Sciatic nerve (tissue), 2 donors: ENCODE measurements at regions of chr4 and their contacts with region 1.

Region 1: GRCh38 chr4:87863486-87863885 is 30.7 kb downstream of the MEPE start:
- DNase-seq: no peak
- ATAC-seq: no peak

Region 2: GRCh38 chr4:87882321-87882720 is 18.8 kb after region 1 on chr4:
- intact Hi-C with region 1: no loop called
- DNase-seq: no peak
- ATAC-seq: no peak

Region 3: DNA sequence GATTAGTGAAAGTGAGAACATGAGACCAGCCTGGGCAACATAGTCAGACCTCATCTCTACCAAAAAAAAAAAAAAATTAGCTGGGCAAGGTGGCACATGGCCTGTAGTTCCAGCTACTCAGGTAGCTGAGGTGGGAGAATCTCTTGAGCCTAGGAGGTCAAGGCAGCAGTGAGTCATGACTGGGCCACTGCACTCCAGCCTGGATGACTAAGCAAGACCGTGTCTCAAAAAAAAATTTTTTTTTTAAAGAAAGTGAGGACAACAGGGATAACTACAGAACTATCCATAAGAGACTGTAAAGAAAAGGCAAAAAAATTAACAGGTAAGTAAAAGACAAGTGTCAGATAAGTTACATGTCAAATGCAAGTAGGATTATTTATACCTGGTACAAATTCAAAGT is 98.5 kb after region 1 on chr4:
- intact Hi-C with region 1: no loop called
- DNase-seq: no peak
- ATAC-seq: no peak

Region 4: GRCh38 chr4:87973283-87974169 is 110.0 kb after region 1 on chr4:
- intact Hi-C with region 1: loop called (anchors 5 kb)
- DNase-seq: peak; percentile 85
- ATAC-seq: peak; percentile 90